ENCODE measurements at regions of chr19 and their contacts with region 1.

Region 1: GRCh38 chr19:3185482-3186376 is at the start of gene NCLN:
- DNase-seq: peak; percentile 91
- ATAC-seq: peak; percentile 95
- H3K4me3 ChIP-seq: peak within 1 kb of the TSS; percentile 94
- H3K27ac ChIP-seq: peak within 1 kb of the TSS; percentile 93
- H3K4me1 ChIP-seq: peaks cover 9% of the 10 kb centered on the region
- H3K27me3 ChIP-seq: no peaks in the 10 kb centered on the region
- CTCF ChIP-seq: no peak
- POLR2A ChIP-seq: no peak
- RAD21 ChIP-seq: no peak
- total RNA-seq, gene NCLN: 32.8 and 35.6 TPM in 2 replicates

Region 2: DNA sequence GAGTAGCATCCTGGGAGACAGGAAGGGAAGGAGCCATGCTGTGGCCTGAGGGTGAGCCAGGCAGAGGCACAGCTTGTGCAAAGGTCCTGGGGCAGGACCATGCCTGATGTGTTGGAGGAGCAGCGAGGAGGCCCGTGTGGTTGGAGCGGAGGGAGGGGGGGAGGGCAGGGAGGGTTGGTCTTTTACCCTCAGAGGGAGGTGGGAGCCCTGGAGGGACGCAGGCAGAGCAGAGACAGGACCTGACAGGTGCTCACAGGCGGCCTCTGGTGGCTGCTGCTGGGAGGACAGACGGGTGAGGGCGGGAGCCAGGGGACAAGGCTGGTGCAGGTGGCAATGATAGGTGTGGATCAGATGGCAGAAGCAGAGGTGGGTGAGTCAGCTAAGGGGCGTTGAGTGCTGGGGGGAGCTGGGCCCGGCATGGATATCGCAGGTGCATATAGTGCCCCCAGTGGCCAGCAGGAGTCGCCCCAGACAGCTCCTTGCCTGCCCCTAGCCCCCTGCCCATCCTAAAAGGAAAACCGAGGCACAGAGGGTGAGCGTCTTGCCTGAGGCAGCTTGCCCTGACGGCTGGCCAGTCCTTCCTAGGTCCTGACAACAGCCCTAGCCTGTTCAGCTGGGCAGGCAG is 59.7 kb before region 1 on chr19:
- CTCF ChIA-PET with region 1: interaction called, 11 read pairs
- POLR2A ChIA-PET with region 1: no interaction called
- dilution Hi-C with region 1: no loop called
- in situ Hi-C with region 1: no loop called
- intact Hi-C with region 1: no loop called
- DNase-seq: no peak
- ATAC-seq: peak; percentile 88
- H3K4me3 ChIP-seq: no peak overlapping the region
- H3K27ac ChIP-seq: no peak overlapping the region
- H3K4me1 ChIP-seq: no peaks in the 10 kb centered on the region
- H3K27me3 ChIP-seq: no peaks in the 10 kb centered on the region
- CTCF ChIP-seq: peak; percentile 53
- POLR2A ChIP-seq: no peak
- RAD21 ChIP-seq: peak; percentile 38; the same call in 1 of the 2 replicates